ENCODE measurements at regions of chr4 and their contacts with region 1.

Region 1: GRCh38 chr4:145557720-145558119 is 61.5 kb upstream of the MMAA start:
- DNase-seq: peak; percentile 74 to 88 (median 84)
- H3K4me3 ChIP-seq: no peak overlapping the region
- H3K27ac ChIP-seq: no peak overlapping the region
- H3K4me1 ChIP-seq: peaks cover 0 to 4% (median 1%) of the 10 kb centered on the region in 4 experiments
- H3K27me3 ChIP-seq: no peaks in the 10 kb centered on the region

Region 2: GRCh38 chr4:145234091-145234706 is 323.5 kb before region 1 on chr4:
- CTCF ChIA-PET with region 1: interaction called, 19 read pairs
- POLR2A ChIA-PET with region 1: no interaction called
- DNase-seq: peak; percentile 66 to 84 (median 76)
- H3K4me3 ChIP-seq: no peak overlapping the region
- H3K27ac ChIP-seq: no peak overlapping the region
- H3K4me1 ChIP-seq: no peaks in the 10 kb centered on the region
- H3K27me3 ChIP-seq: peaks cover 0 to 2% (median 0%) of the 10 kb centered on the region in 5 experiments

Region 3: GRCh38 chr4:145494666-145495270 is 63.0 kb before region 1 on chr4:
- CTCF ChIA-PET with region 1: interaction called, 10 read pairs
- POLR2A ChIA-PET with region 1: no interaction called
- DNase-seq: peak in 2 of 3 donors; percentile 51 to 70
- H3K4me3 ChIP-seq: no peak overlapping the region
- H3K27ac ChIP-seq: no peak overlapping the region
- H3K4me1 ChIP-seq: peaks cover 6 to 54% (median 33%) of the 10 kb centered on the region in 4 experiments
- H3K27me3 ChIP-seq: no peaks in the 10 kb centered on the region

Region 4: DNA sequence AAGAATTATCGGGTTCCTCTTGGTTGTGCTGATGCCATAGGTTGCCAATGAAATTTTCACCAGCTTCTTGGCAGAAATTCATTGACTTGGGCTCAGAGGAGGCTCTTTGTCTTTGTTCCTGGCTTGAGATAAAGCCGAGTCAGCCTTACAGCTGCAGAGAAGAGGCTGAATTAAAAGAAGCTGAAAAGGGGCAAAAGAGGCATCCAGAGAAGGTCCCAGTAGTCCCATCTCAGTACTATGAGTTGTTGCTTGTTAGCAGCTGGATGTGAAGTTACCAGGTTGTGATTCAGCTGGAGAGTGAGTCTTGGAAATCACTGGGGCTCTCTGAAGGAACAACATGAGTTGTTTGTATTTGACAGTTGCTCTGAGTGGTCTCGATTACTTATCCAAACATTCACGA is 16.4 kb before region 1 on chr4:
- CTCF ChIA-PET with region 1: interaction called, 14 read pairs
- POLR2A ChIA-PET with region 1: interaction called, 3 read pairs
- DNase-seq: no peak
- H3K4me3 ChIP-seq: no peak overlapping the region
- H3K27ac ChIP-seq: no peak overlapping the region
- H3K4me1 ChIP-seq: peaks cover 0 to 20% (median 14%) of the 10 kb centered on the region in 4 experiments
- H3K27me3 ChIP-seq: no peaks in the 10 kb centered on the region

Region 5: GRCh38 chr4:145920205-145920604 is 362.5 kb after region 1 on chr4:
- CTCF ChIA-PET with region 1: no interaction called
- POLR2A ChIA-PET with region 1: no interaction called
- DNase-seq: peak in 2 of 3 donors; percentile 83 to 84
- H3K4me3 ChIP-seq: peak overlapping the region in 2 of 7 experiments; percentile 23 to 49
- H3K27ac ChIP-seq: no peak overlapping the region
- H3K4me1 ChIP-seq: peaks cover 3 to 23% (median 7%) of the 10 kb centered on the region in 4 experiments
- H3K27me3 ChIP-seq: no peaks in the 10 kb centered on the region